Dorsolateral prefrontal cortex (tissue), 120 donors: ENCODE measurements at regions of chr2 and their contacts with region 1.

Region 1: DNA sequence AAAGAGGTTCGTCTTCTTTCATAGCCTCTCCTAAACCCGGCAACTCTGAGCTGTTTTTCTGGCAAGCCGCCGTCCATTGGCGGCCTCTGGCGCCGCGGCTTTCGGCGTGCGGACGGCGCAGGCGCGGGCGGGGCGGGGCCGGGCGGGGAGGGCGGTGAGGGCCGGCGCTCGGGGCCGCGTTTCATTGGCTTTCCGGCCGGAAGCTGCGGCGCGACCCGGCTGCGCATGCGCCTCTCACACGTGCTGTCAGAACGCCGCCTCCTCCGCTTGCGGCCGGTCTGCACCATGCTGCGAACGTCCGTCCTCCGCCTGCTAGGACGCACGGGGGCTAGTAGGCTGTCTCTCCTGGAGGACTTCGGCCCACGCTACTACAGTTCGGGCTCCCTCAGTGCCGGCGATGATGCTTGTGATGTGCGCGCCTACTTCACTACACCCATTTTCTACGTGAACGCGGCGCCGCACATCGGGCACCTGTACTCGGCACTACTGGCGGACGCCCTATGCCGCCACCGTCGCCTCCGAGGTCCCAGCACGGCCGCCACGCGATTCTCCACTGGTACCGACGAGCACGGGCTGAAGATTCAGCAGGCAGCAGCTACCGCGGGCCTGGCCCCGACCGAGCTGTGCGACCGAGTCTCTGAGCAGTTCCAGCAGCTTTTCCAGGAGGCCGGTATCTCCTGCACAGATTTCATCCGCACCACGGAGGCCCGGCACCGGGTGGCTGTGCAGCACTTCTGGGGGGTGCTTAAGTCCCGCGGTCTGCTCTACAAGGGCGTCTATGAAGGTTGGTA is at the start of gene MARS2:
- DNase-seq: peak; percentile 82 to 95 (median 90)
- H3K4me3 ChIP-seq: peak within 1 kb of the TSS; percentile 57 to 98 (median 88)
- H3K27ac ChIP-seq: peak within 1 kb of the TSS; percentile 59 to 98 (median 94)
- H3K27me3 ChIP-seq: no peaks in the 10 kb centered on the region
- CTCF ChIP-seq: peak in 44 of 56 donors; percentile 6 to 66 (median 37)
- total RNA-seq, gene MARS2: 6.7 to 16.4 (median 10.3) TPM

Region 2: DNA sequence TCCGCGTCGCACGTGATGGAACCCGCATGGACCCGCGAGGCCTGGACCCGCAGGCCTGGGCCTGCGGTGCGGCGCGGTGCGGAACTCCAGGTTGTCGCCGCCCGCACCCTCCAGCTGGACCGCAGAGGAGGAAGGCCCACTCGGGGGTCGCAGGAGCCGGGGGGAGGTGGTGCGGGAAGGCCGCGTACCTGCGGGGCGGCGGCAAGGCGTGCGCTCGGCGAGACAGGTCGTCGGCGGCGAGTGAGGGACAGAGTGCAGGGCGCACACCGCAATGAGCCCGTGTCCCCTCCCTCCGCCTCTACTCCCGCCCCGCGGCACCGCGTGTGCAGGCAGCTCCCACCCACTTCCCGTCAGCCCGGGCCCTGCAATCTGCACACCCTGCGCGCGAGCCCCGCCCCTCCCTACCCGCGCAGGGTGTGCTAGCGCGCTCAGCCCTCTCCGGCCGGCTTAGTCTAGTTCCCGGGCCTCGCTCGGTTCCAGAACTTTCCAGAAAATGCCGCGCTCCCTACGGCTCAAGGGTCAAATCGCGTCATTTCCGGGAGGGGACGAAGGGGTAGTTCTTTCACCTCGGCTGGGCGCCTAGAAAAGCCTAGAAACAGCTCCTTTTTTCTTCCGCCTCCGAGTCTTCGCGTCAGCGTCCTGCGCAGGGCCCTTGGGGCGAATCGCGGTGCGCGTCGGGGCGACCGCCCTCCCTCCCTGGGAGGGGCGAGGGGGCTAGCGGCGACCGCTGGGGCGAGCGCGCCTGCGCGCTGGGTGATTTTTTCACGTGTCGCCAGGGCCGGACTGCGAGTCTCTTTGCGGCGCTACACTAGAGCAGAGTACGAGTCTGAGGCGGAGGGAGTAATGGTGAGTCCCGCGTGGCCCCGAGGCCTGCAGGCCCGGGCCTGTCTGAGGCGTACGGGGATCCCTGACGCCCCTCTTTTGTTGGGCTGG is 205.5 kb before region 1 on chr2 and contains the starts of genes HSPD1 and HSPE1:
- intact Hi-C with region 1: loop called (anchors 1 kb)
- DNase-seq: peak; percentile 95 to 99 (median 97)
- H3K4me3 ChIP-seq: peak within 1 kb of the TSS; percentile 65 to 100 (median 92)
- H3K27ac ChIP-seq: peak within 1 kb of the TSS; percentile 96 to 100 (median 100)
- H3K27me3 ChIP-seq: no peaks in the 10 kb centered on the region
- CTCF ChIP-seq: peak in 17 of 56 donors; percentile 3 to 30 (median 10)
- total RNA-seq, gene HSPD1: 104 to 555 (median 149) TPM
- total RNA-seq, gene HSPE1: 54.9 to 298 (median 81.8) TPM

Region 3: DNA sequence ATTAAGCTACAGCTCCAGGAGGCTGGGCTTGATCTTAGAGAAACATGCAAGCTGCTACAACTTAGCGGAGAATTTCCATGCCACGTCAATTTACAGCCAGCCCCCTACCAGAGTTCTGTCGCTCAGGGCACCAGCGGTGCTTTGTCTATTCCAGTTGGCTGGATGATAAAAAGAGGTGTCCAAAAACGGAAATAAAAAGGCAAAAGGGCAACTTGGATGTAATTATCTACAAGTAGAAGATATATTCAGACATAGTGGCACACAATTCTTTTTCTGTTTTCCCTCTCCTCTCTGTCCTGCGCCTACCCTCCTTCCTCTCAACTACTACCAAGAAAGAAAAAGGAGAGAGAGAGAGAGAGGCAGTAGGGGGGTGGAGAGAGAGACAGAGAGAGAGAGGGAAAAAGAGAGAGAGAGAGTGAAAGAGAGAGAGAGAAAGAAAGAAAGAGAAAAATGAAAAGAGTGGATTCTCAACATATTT is 29.6 kb before region 1 on chr2:
- intact Hi-C with region 1: loop called in 1 of 2 experiments (anchors 2 kb)
- DNase-seq: peak in 3 of 10 donors; percentile 11 to 48 (median 21)
- H3K4me3 ChIP-seq: peak overlapping the region; percentile 38 to 81 (median 64)
- H3K27ac ChIP-seq: peak overlapping the region; percentile 44 to 100 (median 96)
- H3K27me3 ChIP-seq: peaks cover 0 to 4% (median 0%) of the 10 kb centered on the region in 45 donors
- CTCF ChIP-seq: peak in 5 of 56 donors; percentile 3 to 17 (median 11)

Region 4: GRCh38 chr2:197740200-197740599 is 34.9 kb after region 1 on chr2:
- intact Hi-C with region 1: no loop called
- DNase-seq: no peak
- H3K4me3 ChIP-seq: no peak overlapping the region
- H3K27ac ChIP-seq: no peak overlapping the region
- H3K27me3 ChIP-seq: no peaks in the 10 kb centered on the region
- CTCF ChIP-seq: no peak

Region 5: DNA sequence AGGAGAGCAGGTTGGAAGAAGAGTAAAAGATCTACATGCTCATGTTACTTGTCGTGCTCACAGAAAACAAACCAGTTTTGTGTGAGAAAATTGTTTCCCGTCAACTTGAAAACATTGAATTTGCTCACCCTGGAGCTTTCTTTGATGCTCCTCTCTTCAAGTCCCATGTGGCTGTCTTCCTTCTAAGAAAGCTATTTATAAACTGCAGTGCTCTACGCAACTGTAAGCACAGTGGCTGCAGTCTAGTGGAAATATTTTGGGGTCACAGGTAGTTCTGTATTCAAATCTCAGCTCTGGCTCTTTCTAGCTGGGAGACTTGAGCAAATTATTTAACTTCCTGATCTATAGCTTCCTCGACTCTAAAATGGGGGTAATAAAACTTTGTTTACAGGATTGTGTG is 310.9 kb after region 1 on chr2:
- intact Hi-C with region 1: no loop called
- DNase-seq: no peak
- H3K4me3 ChIP-seq: no peak overlapping the region
- H3K27ac ChIP-seq: peak overlapping the region in 3 of 59 donors; percentile 2 to 12 (median 2)
- H3K27me3 ChIP-seq: no peaks in the 10 kb centered on the region
- CTCF ChIP-seq: no peak

Region 6: DNA sequence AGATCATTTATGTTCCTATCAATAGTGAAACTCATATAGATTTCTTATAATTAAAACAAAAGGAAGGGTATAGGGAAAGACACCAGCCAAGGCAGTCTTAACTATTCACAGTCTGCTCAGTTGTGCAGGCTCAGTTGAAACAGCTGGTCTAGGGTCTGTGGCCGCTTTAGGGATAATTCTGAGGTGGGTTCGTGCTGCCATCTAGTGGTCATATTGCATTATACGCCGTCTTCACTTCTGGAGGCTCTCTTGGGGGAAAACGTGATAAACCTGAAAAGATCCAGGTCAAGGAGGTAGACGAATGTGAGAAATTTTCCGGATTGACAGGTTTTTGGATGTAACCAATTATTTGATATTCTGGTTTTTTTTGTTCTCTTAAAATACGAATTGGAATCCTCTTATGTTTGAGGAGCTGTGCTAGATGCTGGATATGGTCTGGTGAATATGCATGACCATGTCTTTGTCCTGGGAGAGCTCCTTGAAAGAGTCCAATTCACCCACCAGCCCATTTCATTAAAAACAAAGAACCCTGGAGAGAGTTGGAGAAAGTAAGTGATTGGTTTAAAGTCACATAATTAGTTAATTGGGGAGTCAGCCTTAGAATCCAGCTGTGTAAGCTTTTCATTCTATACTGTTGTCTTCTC is 591.5 kb after region 1 on chr2:
- intact Hi-C with region 1: loop called in 1 of 2 experiments (anchors 5 kb)
- DNase-seq: peak in 8 of 10 donors; percentile 37 to 76 (median 56)
- H3K4me3 ChIP-seq: peak overlapping the region in 8 of 59 donors; percentile 3 to 47 (median 18)
- H3K27ac ChIP-seq: no peak overlapping the region
- H3K27me3 ChIP-seq: no peaks in the 10 kb centered on the region
- CTCF ChIP-seq: peak; percentile 74 to 98 (median 91)